Dorsolateral prefrontal cortex (tissue), 120 donors: ENCODE measurements at regions of chr1 and their contacts with region 1.

Region 1: GRCh38 chr1:84298328-84298683 is 3.2 kb upstream of the SAMD13 start:
- DNase-seq: peak; percentile 56 to 85 (median 64)
- H3K4me3 ChIP-seq: peak overlapping the region; percentile 62 to 96 (median 82)
- H3K27ac ChIP-seq: peak overlapping the region; percentile 75 to 98 (median 95)
- H3K27me3 ChIP-seq: peaks cover 0 to 3% (median 0%) of the 10 kb centered on the region in 45 donors
- CTCF ChIP-seq: peak in 17 of 56 donors; percentile 4 to 45 (median 19)

Region 2: GRCh38 chr1:84156210-84156621 is 142.1 kb before region 1 on chr1:
- intact Hi-C with region 1: loop called in 1 of 2 experiments (anchors 10 kb)
- DNase-seq: no peak
- H3K4me3 ChIP-seq: no peak overlapping the region
- H3K27ac ChIP-seq: peak overlapping the region in 8 of 59 donors; percentile 5 to 39 (median 23)
- H3K27me3 ChIP-seq: no peaks in the 10 kb centered on the region
- CTCF ChIP-seq: no peak

Region 3: GRCh38 chr1:84166797-84167196 is 131.5 kb before region 1 on chr1:
- intact Hi-C with region 1: loop called in 1 of 2 experiments (anchors 5 kb)
- DNase-seq: no peak
- H3K4me3 ChIP-seq: peak overlapping the region; percentile 35 to 77 (median 62)
- H3K27ac ChIP-seq: peak overlapping the region in 51 of 59 donors; percentile 27 to 97 (median 91)
- H3K27me3 ChIP-seq: no peaks in the 10 kb centered on the region
- CTCF ChIP-seq: no peak

Region 4: GRCh38 chr1:84253891-84254290 is 44.4 kb before region 1 on chr1:
- intact Hi-C with region 1: loop called (anchors 2 to 5 kb)
- DNase-seq: peak; percentile 10 to 93 (median 85)
- H3K4me3 ChIP-seq: peak overlapping the region in 6 of 59 donors; percentile 3 to 49 (median 11)
- H3K27ac ChIP-seq: peak overlapping the region in 58 of 59 donors; percentile 10 to 95 (median 84)
- H3K27me3 ChIP-seq: no peaks in the 10 kb centered on the region
- CTCF ChIP-seq: peak in 6 of 56 donors; percentile 9 to 38 (median 16)

Region 5: DNA sequence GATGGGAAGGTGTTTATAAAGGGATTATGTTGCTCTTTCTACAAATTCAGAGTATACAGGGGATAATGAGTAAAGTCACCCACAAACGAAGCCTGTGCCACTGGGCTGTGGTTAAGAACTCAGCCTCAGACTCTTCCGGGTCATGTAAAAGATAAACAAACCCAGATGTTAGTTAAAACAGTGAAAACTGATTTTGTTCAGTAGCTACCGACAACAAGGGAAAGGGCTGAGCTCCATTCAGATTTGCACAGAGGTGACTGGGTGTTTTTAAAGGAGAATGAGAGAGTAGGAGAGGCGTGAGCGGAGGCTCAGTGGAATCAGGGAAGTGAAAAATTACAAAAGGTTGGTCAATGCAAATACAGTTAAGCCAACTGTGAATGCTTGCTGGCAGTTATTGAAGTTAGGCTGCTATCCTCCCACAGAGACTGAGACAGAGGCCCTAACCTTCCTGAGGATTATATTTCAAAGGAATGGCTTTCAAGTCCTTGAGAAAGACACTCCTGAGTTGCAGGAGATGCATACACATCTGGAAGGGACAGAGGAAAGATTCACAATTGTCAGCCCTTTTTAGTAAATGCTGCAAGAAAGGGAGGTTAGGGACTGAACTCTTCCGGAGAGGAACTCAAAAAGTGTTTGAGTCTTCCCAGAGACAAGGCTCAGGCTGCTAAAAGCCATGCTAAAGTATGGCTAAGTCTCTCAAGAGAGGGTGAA is 26.7 kb before region 1 on chr1:
- intact Hi-C with region 1: no loop called
- DNase-seq: no peak
- H3K4me3 ChIP-seq: no peak overlapping the region
- H3K27ac ChIP-seq: peak overlapping the region in 2 of 59 donors; percentile 1 to 28
- H3K27me3 ChIP-seq: no peaks in the 10 kb centered on the region
- CTCF ChIP-seq: no peak

Region 6: GRCh38 chr1:84353695-84354094 is 55.4 kb after region 1 on chr1:
- intact Hi-C with region 1: loop called in 1 of 2 experiments (anchors 5 kb)
- DNase-seq: no peak
- H3K4me3 ChIP-seq: no peak overlapping the region
- H3K27ac ChIP-seq: peak overlapping the region in 20 of 59 donors; percentile 8 to 95 (median 56)
- H3K27me3 ChIP-seq: no peaks in the 10 kb centered on the region
- CTCF ChIP-seq: no peak

Region 7: GRCh38 chr1:84620720-84621313 is 322.5 kb after region 1 on chr1:
- intact Hi-C with region 1: no loop called
- DNase-seq: peak; percentile 50 to 90 (median 64)
- H3K4me3 ChIP-seq: peak overlapping the region; percentile 47 to 93 (median 74)
- H3K27ac ChIP-seq: peak overlapping the region in 57 of 59 donors; percentile 23 to 94 (median 87)
- H3K27me3 ChIP-seq: no peaks in the 10 kb centered on the region
- CTCF ChIP-seq: peak in 55 of 56 donors; percentile 86 to 100 (median 98)